HCT116 (cell line): ENCODE measurements at regions of chr19 and their contacts with region 1.

Region 1: DNA sequence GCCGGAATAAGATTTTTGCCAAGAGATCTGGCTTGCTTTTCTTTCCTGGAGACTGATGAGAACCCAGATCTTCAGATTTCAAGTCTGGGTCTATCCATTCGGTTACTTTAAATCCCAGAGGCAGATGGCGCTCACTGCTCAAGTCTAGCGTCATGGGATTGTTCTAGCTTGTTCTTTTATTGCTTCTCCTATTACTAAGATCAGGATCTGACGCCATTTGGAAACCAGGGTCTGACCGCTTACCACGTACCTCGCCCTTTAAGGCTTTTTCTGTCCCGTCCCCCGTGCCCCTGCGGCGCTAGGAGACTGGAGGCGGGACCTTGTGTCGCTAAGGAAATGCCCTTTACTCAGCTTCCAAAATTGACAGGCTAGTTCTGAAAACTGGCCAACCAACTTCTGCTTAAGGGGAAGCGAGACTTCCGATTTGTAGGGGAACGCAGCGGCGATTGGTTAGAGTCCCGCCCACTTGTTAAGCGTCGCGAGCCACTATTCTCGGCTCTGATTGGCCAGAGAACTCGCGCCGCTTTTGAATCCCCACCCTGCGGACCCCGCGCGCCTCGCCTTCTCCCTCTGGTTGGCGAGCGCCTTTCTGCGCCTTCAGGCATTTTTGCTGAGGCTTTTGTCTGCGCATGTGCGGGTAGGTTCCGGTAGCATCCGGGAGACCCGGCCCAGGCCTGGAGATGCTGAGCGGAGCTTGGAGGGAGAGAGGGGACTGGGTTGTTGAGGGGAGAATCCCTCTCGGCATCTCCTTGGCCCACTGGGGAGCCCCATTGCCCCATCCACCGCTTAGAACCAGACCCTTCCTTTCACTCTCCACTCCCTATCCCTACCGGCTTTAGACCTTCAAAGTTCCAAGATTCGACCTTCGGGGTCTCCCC is 3.8 kb upstream of the C19orf84 start:
- DNase-seq: peak; percentile 100
- ATAC-seq: peak; percentile 90
- H3K4me3 ChIP-seq: peak overlapping the region; percentile 65 to 95
- H3K27ac ChIP-seq: peak overlapping the region; percentile 81
- H3K4me1 ChIP-seq: peaks cover 6 to 25% of the 10 kb centered on the region in 2 experiments; a peak in 3 of 4 replicates
- H3K27me3 ChIP-seq: no peaks in the 10 kb centered on the region
- CTCF ChIP-seq: no peak
- POLR2A ChIP-seq: peak; percentile 59
- RAD21 ChIP-seq: no peak

Region 2: GRCh38 chr19:51367565-51368365 is 26.4 kb before region 1 on chr19:
- CTCF ChIA-PET with region 1: interaction called, 3 read pairs
- POLR2A ChIA-PET with region 1: interaction called, 7 read pairs
- RAD21 ChIA-PET with region 1: no interaction called
- intact Hi-C with region 1: loop called (anchors 1 kb)
- DNase-seq: peak; percentile 97
- ATAC-seq: peak; percentile 85
- H3K4me3 ChIP-seq: peak overlapping the region; percentile 78 to 94
- H3K27ac ChIP-seq: peak overlapping the region; percentile 84
- H3K4me1 ChIP-seq: peaks cover 28 to 43% of the 10 kb centered on the region in 2 experiments
- H3K27me3 ChIP-seq: no peaks in the 10 kb centered on the region
- CTCF ChIP-seq: no peak
- POLR2A ChIP-seq: peak; percentile 17
- RAD21 ChIP-seq: no peak

Region 3: GRCh38 chr19:51407511-51408131 is 13.4 kb after region 1 on chr19:
- CTCF ChIA-PET with region 1: interaction called, 16 read pairs
- POLR2A ChIA-PET with region 1: interaction called, 3 read pairs
- RAD21 ChIA-PET with region 1: no interaction called
- intact Hi-C with region 1: no loop called
- DNase-seq: peak; percentile 46
- ATAC-seq: peak; percentile 90
- H3K4me3 ChIP-seq: no peak overlapping the region
- H3K27ac ChIP-seq: no peak overlapping the region
- H3K4me1 ChIP-seq: no peaks in the 10 kb centered on the region
- H3K27me3 ChIP-seq: no peaks in the 10 kb centered on the region
- CTCF ChIP-seq: peak; percentile 66 to 83 (median 73)
- POLR2A ChIP-seq: no peak
- RAD21 ChIP-seq: peak; percentile 81